ENCODE measurements at regions of chr2 and their contacts with region 1.

Region 1: GRCh38 chr2:170928824-170929685 is at the start of gene GORASP2:
- DNase-seq: peak; percentile 98
- H3K4me3 ChIP-seq: peak within 1 kb of the TSS; percentile 90
- CTCF ChIP-seq: peak; percentile 81

Region 2: DNA sequence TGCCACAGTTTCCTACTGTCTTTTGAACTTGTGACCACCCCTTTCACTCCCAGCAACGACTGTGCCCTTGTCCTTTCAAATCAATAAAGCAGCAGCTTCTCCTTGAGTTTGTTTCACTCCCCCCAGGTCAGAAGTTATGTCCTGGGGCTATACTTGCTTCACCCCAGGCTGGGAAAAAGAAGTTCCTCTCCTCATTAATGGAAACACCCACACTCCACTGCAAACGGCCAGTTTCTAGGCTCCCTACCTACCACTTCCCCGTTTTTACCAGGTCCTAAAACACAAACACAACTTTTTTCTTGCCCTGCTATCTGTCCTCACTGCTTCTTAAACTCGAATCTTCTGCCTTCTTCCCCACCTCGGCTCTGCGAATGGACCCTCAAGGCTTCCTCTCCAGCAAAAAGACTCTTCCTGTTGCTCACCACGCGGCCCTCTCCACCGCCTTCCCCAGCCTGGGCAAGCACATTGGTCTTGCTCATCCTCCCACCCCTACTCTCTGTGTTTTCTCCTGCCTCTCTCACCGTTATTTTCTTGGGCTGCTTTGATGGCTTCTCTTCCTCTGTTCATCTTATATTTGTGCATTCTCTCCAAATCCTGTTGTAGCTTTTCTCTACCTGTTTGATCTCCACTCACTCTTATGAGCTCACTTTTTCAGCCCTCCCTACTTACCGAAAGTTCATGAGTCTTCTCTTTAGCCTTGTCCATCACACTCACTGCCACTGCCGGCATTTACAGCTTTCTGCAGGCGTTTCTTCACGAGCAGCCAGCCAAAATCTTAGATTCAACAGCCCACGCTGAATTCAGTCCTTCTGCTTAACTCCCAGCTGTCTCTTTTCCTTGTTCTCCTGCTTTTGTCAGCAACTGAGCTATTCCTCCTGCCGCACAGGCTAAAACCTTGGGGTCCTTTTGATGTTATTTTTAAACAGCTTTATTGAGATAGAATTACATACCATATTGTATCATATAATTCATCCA is 220.9 kb before region 1 on chr2:
- CTCF ChIA-PET with region 1: no interaction called
- POLR2A ChIA-PET with region 1: no interaction called
- DNase-seq: no peak
- H3K4me3 ChIP-seq: no peak overlapping the region
- CTCF ChIP-seq: no peak

Region 3: GRCh38 chr2:170836027-170836426 is 93.0 kb before region 1 on chr2:
- CTCF ChIA-PET with region 1: no interaction called
- POLR2A ChIA-PET with region 1: no interaction called
- DNase-seq: no peak
- H3K4me3 ChIP-seq: no peak overlapping the region
- CTCF ChIP-seq: no peak

Region 4: GRCh38 chr2:170892391-170892951 is 36.6 kb before region 1 on chr2:
- CTCF ChIA-PET with region 1: interaction called, 11 read pairs
- POLR2A ChIA-PET with region 1: no interaction called
- DNase-seq: no peak
- H3K4me3 ChIP-seq: no peak overlapping the region
- CTCF ChIP-seq: no peak

Region 5: DNA sequence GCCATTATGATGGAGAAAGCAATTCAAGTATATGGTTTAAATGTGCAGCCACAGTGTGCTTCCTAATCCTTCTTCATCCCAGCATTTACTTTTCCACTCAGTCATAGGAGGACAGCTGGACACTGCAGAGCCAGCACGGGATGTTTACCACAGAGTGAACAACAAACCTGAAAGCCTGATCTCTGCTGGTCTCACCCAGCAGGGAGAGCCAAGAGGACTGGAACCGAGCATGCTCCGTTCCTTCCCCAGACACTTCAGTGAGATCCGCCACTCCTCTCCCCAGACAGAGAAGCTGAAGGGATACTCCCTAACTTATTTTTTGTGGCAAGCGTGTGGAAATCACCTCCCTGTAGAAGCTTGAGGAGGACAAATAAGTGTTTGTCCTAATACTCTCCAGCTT is 23.2 kb before region 1 on chr2:
- CTCF ChIA-PET with region 1: interaction called, 32 read pairs
- POLR2A ChIA-PET with region 1: no interaction called
- DNase-seq: no peak
- H3K4me3 ChIP-seq: no peak overlapping the region
- CTCF ChIP-seq: no peak

Region 6: GRCh38 chr2:170917219-170917913 is 11.7 kb before region 1 on chr2:
- CTCF ChIA-PET with region 1: interaction called, 15 read pairs
- POLR2A ChIA-PET with region 1: interaction called, 3 read pairs
- DNase-seq: no peak
- H3K4me3 ChIP-seq: no peak overlapping the region
- CTCF ChIP-seq: no peak

Region 7: DNA sequence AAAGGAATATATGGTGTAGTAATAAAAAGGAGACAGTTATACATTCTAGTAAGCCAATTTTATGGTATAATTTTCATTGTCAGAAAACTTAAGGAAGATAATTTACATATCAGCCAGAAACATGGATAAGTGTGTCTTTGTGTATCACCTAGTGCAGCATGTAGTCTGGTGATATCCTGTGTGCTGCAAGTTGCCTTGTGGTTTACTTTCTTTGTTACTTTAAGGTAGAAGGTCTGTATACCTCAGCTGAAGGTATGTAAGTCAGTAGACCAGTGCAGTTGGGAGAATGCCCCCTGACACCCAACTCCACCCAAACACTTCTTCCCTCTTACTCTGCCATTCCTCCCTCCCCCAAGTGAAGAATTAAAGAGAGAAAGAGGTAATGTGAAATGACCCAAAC is 11.0 kb after region 1 on chr2:
- CTCF ChIA-PET with region 1: interaction called, 57 read pairs
- POLR2A ChIA-PET with region 1: interaction called, 6 read pairs
- DNase-seq: no peak
- H3K4me3 ChIP-seq: no peak overlapping the region
- CTCF ChIP-seq: no peak

Region 8: GRCh38 chr2:170950221-170950761 is 21.2 kb after region 1 on chr2:
- CTCF ChIA-PET with region 1: interaction called, 40 read pairs
- POLR2A ChIA-PET with region 1: no interaction called
- DNase-seq: no peak
- H3K4me3 ChIP-seq: no peak overlapping the region
- CTCF ChIP-seq: no peak